ENCODE measurements at regions of chr5 and their contacts with region 1.

Region 1: DNA sequence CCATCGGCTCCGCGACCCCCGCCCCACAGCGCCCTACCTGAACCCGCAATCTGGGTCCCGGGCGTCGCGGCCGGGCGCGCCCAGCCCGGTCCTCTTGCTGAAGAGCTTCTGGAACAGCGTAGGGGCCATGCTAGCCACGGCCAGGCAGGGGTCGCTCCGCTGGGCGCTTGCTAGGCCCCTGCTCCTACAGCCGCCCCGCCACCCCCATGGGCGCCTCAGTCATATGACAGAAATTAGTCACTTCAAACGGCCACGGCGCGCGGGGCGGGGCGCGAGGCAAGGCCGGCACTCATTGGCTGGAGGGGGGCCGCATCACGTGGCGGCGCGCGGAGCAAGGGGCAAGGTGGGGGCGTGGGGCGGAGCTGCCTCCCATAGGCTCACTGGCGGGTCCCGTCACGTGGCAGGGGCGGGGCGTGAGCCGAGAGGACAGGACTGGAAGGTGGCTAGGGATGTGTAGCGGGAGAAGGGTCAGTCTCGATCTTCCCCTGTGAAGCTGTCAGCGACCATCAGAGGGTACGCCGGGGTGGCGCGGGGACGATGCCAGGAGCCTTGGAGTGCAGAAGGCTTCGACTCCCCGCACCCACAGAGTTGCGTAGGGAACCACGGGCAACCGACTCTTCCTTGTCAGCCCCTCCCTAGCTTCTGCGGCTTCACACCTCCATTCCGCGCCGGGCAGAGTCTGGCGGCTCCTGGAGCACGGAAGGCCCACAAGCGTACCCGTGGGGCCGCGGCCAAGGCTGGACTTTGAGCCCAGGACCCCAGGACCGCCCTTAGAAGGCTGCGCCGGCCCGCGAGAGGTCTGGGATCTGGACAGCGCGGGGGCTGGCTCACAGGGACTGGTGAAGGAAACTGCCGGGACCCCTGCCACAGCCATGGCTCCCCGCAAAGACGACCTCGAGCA is at the start of gene FNIP1:
- DNase-seq: peak; percentile 99
- H3K4me3 Mint-ChIP-seq: peak within 1 kb of the TSS; percentile 97
- H3K27ac Mint-ChIP-seq: peak within 1 kb of the TSS; percentile 84
- H3K4me1 Mint-ChIP-seq: peaks cover 33% of the 10 kb centered on the region
- H3K27me3 Mint-ChIP-seq: no peaks in the 10 kb centered on the region
- total RNA-seq, gene FNIP1: 14.0 to 15.9 TPM

Region 2: GRCh38 chr5:131541762-131542161 is 255.3 kb before region 1 on chr5:
- CTCF ChIA-PET with region 1: no interaction called
- POLR2A ChIA-PET with region 1: no interaction called
- intact Hi-C with region 1: loop called (anchors 5 kb)
- DNase-seq: no peak
- H3K4me3 Mint-ChIP-seq: no peak overlapping the region
- H3K27ac Mint-ChIP-seq: peak overlapping the region; percentile 82
- H3K4me1 Mint-ChIP-seq: peaks cover 80% of the 10 kb centered on the region
- H3K27me3 Mint-ChIP-seq: no peaks in the 10 kb centered on the region

Region 3: GRCh38 chr5:131747180-131748105 is 49.6 kb before region 1 on chr5:
- CTCF ChIA-PET with region 1: no interaction called
- POLR2A ChIA-PET with region 1: no interaction called
- intact Hi-C with region 1: loop called (anchors 1 kb)
- DNase-seq: no peak
- H3K4me3 Mint-ChIP-seq: peak overlapping the region; percentile 35
- H3K27ac Mint-ChIP-seq: peak overlapping the region; percentile 78
- H3K4me1 Mint-ChIP-seq: peaks cover 33% of the 10 kb centered on the region
- H3K27me3 Mint-ChIP-seq: no peaks in the 10 kb centered on the region

Region 4: GRCh38 chr5:132050136-132050535 is 253.1 kb after region 1 on chr5:
- CTCF ChIA-PET with region 1: no interaction called
- POLR2A ChIA-PET with region 1: no interaction called
- intact Hi-C with region 1: no loop called
- DNase-seq: no peak
- H3K4me3 Mint-ChIP-seq: no peak overlapping the region
- H3K27ac Mint-ChIP-seq: no peak overlapping the region
- H3K4me1 Mint-ChIP-seq: peaks cover 8% of the 10 kb centered on the region
- H3K27me3 Mint-ChIP-seq: no peaks in the 10 kb centered on the region